ENCODE measurements at regions of chr1 and their contacts with region 1.

Region 1: GRCh38 chr1:19661721-19662228 is 2.9 kb upstream of the HTR6 start:
- DNase-seq: no peak
- ATAC-seq: peak; percentile 27; the same call in 2 of the 3 replicates
- H3K4me3 ChIP-seq: no peak overlapping the region
- H3K27ac ChIP-seq: no peak overlapping the region
- H3K4me1 ChIP-seq: peaks cover 6% of the 10 kb centered on the region; the same call in 1 of the 2 replicates
- H3K27me3 ChIP-seq: peaks cover 0 to 2% of the 10 kb centered on the region in 2 experiments; a peak in 2 of 4 replicates
- CTCF ChIP-seq: peak; percentile 43 to 69 (median 63)
- EP300 ChIP-seq: no peak
- POLR2A ChIP-seq: no peak
- RAD21 ChIP-seq: peak; percentile 78

Region 2: DNA sequence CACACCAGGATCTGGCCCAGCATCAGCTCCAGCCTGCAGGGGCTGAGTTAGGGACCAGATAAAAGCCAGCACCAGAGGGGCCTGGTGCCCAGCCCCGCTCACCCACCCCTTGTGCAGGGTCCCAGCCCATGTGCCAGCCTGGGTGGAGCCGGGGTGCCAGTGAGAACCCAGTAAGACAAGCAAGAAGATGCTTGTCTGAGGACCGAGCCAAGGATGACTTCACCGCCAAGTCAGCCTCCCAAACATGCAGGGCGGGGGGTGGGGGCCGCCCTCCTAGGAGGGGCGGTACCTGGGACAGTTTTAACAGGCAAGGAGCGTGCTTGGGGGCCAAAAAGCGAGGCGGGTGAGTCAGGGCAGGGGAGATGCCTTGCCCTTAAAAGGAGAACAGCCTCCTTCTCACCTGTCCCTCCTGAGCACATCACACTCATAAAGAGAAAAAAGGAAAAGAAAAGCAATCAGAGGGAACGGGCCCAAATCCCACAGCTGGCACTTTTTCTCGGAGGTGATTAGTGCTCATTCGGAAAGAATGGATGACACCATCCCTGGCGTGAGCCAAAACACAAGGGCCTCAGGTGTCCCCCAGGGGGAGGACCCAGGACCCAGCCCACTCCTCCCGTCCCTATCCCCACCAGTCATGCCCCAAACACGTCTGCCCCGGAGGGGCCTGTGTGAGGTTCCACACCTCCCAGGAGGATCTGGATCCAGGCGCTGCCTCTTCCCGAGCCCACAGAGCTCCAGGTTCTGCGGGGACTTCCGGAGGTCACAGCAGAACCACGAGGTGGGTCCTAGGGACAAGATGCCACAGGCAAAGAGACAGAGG is 627.7 kb before region 1 on chr1:
- CTCF ChIA-PET with region 1: no interaction called
- POLR2A ChIA-PET with region 1: no interaction called
- RAD21 ChIA-PET with region 1: no interaction called
- SMC1A ChIA-PET with region 1: no interaction called
- in situ Hi-C with region 1: no loop called
- intact Hi-C with region 1: no loop called
- DNase-seq: no peak
- ATAC-seq: no peak
- H3K4me3 ChIP-seq: no peak overlapping the region
- H3K27ac ChIP-seq: no peak overlapping the region
- H3K4me1 ChIP-seq: no peaks in the 10 kb centered on the region
- H3K27me3 ChIP-seq: peaks cover 0 to 5% of the 10 kb centered on the region in 2 experiments; a peak in 2 of 4 replicates
- CTCF ChIP-seq: no peak
- EP300 ChIP-seq: no peak
- POLR2A ChIP-seq: no peak
- RAD21 ChIP-seq: no peak

Region 3: GRCh38 chr1:19533626-19534025 is 128.1 kb before region 1 on chr1:
- CTCF ChIA-PET with region 1: no interaction called
- POLR2A ChIA-PET with region 1: no interaction called
- RAD21 ChIA-PET with region 1: no interaction called
- SMC1A ChIA-PET with region 1: no interaction called
- in situ Hi-C with region 1: no loop called
- intact Hi-C with region 1: no loop called
- DNase-seq: no peak
- ATAC-seq: no peak
- H3K4me3 ChIP-seq: no peak overlapping the region
- H3K27ac ChIP-seq: no peak overlapping the region
- H3K4me1 ChIP-seq: no peaks in the 10 kb centered on the region
- H3K27me3 ChIP-seq: no peaks in the 10 kb centered on the region
- CTCF ChIP-seq: no peak
- EP300 ChIP-seq: no peak
- POLR2A ChIP-seq: no peak
- RAD21 ChIP-seq: no peak

Region 4: DNA sequence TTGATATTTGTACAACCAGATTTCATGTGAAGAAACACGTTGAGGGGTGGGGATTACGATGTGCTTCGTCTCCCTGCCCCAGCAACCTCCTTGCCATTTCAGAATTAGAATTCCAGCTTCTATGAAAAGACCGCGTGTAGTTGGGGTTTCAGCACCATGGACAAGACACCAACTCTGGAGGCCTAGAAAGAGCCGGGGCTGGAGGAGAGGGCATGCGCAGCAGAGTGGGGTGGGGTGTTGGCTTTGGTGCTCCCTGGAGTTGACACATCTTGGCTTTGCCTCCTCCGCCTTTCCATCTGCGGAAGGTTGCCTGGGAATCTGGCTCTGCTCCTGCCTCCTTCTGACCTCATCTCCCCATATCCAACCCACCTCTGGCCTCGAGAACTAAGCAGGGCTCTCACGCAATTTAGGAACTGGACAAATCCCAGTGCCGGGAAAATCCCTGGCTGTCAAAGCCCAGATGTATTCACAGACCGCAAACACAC is 14.7 kb after region 1 on chr1:
- CTCF ChIA-PET with region 1: interaction called, 24 read pairs
- POLR2A ChIA-PET with region 1: no interaction called
- RAD21 ChIA-PET with region 1: interaction called, 3 read pairs
- SMC1A ChIA-PET with region 1: interaction called, 4 read pairs
- in situ Hi-C with region 1: no loop called
- intact Hi-C with region 1: no loop called
- DNase-seq: no peak
- ATAC-seq: peak; percentile 63
- H3K4me3 ChIP-seq: no peak overlapping the region
- H3K27ac ChIP-seq: no peak overlapping the region
- H3K4me1 ChIP-seq: no peaks in the 10 kb centered on the region
- H3K27me3 ChIP-seq: peaks cover 0 to 1% of the 10 kb centered on the region in 2 experiments; a peak in 2 of 4 replicates
- CTCF ChIP-seq: no peak
- EP300 ChIP-seq: no peak
- POLR2A ChIP-seq: no peak
- RAD21 ChIP-seq: no peak

Region 5: DNA sequence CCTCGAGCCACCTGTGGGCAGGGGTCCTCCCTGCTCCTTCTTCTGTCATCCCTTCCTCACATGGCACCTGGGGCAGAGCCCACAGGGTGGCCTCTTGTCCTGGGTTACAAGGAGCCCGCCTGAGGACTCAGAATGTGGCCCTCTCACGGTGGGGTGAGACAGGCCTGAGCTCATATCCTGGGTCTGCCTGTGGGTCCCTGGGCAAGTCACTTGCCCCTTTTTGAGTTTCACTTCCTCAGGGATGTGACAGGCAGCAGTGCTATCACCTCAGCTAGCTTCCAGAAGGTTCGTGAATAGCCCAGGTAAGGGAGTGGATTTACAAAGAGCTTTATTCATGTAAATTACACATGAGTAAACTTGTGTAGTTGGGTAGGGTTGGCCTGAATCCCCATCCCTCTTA is 36.4 kb after region 1 on chr1:
- CTCF ChIA-PET with region 1: interaction called, 378 read pairs
- POLR2A ChIA-PET with region 1: no interaction called
- RAD21 ChIA-PET with region 1: interaction called, 84 read pairs
- SMC1A ChIA-PET with region 1: interaction called, 99 read pairs
- in situ Hi-C with region 1: loop called (anchors 5 kb)
- intact Hi-C with region 1: no loop called
- DNase-seq: no peak
- ATAC-seq: peak; percentile 97
- H3K4me3 ChIP-seq: no peak overlapping the region
- H3K27ac ChIP-seq: no peak overlapping the region
- H3K4me1 ChIP-seq: peaks cover 4% of the 10 kb centered on the region
- H3K27me3 ChIP-seq: no peaks in the 10 kb centered on the region
- CTCF ChIP-seq: no peak
- EP300 ChIP-seq: no peak; a peak in 1 of 4 replicates
- POLR2A ChIP-seq: no peak
- RAD21 ChIP-seq: no peak

Region 6: DNA sequence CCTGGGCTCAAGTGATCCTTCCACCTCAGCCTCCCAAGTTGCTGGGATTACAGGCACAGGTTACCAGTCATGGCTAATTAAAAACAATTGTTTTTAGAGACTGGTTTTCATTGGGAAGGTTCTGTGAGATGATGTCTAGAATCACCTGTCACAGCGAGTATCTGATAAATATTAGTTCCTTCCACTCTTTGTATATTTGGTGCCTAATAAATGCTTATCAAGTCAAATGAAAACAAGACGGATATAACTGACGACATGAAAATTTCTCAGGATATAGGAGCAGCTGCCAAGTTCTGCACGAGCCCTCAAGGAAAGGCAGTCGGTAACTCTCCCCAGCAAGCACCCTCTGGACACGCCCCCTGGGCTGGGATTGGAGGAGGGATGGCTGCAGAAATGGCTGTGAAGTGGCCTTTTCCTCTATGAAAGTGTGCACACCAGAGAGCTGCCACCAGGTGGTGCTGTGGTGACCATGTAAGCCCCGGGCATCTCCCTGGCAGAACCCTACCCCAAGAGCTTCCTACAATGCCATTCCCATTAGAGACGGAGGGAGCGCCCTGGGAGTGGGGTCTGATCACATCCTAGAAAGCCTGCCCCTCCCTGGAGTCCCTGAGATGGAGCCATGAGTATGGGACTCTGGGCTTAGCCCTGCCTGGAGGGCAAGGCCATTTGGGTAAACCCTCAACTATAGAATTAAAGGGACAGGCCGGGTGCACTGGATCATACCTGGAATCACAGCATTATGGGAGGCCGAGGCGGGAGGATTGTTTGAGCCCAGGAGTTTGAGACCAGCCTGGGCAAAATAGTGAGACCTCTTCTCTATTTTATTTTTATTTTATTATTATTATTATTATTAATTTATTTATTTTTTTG is 53.8 kb after region 1 on chr1:
- CTCF ChIA-PET with region 1: interaction called, 378 read pairs
- POLR2A ChIA-PET with region 1: interaction called, 3 read pairs
- RAD21 ChIA-PET with region 1: interaction called, 10 read pairs
- SMC1A ChIA-PET with region 1: interaction called, 11 read pairs
- in situ Hi-C with region 1: no loop called
- intact Hi-C with region 1: no loop called
- DNase-seq: peak; percentile 66
- ATAC-seq: peak; percentile 89
- H3K4me3 ChIP-seq: no peak overlapping the region
- H3K27ac ChIP-seq: no peak overlapping the region
- H3K4me1 ChIP-seq: peaks cover 22% of the 10 kb centered on the region
- H3K27me3 ChIP-seq: no peaks in the 10 kb centered on the region
- CTCF ChIP-seq: peak; percentile 85 to 91 (median 87)
- EP300 ChIP-seq: no peak
- POLR2A ChIP-seq: no peak
- RAD21 ChIP-seq: peak; percentile 63

Region 7: GRCh38 chr1:19811206-19811851 is 149.6 kb after region 1 on chr1:
- CTCF ChIA-PET with region 1: interaction called, 32 read pairs
- POLR2A ChIA-PET with region 1: no interaction called
- RAD21 ChIA-PET with region 1: interaction called, 13 read pairs
- SMC1A ChIA-PET with region 1: interaction called, 4 read pairs
- in situ Hi-C with region 1: loop called (anchors 5 kb)
- intact Hi-C with region 1: loop called (anchors 1 kb)
- DNase-seq: no peak
- ATAC-seq: peak; percentile 96
- H3K4me3 ChIP-seq: no peak overlapping the region
- H3K27ac ChIP-seq: no peak overlapping the region
- H3K4me1 ChIP-seq: no peaks in the 10 kb centered on the region
- H3K27me3 ChIP-seq: no peaks in the 10 kb centered on the region; a peak in 1 of 4 replicates
- CTCF ChIP-seq: peak; percentile 71 to 76 (median 74)
- EP300 ChIP-seq: no peak
- POLR2A ChIP-seq: no peak
- RAD21 ChIP-seq: peak; percentile 60

Measured in GM12878 (cell line).